OCI-LY7 (cell line): ENCODE measurements at regions of chr22 and their contacts with region 1.

Region 1: DNA sequence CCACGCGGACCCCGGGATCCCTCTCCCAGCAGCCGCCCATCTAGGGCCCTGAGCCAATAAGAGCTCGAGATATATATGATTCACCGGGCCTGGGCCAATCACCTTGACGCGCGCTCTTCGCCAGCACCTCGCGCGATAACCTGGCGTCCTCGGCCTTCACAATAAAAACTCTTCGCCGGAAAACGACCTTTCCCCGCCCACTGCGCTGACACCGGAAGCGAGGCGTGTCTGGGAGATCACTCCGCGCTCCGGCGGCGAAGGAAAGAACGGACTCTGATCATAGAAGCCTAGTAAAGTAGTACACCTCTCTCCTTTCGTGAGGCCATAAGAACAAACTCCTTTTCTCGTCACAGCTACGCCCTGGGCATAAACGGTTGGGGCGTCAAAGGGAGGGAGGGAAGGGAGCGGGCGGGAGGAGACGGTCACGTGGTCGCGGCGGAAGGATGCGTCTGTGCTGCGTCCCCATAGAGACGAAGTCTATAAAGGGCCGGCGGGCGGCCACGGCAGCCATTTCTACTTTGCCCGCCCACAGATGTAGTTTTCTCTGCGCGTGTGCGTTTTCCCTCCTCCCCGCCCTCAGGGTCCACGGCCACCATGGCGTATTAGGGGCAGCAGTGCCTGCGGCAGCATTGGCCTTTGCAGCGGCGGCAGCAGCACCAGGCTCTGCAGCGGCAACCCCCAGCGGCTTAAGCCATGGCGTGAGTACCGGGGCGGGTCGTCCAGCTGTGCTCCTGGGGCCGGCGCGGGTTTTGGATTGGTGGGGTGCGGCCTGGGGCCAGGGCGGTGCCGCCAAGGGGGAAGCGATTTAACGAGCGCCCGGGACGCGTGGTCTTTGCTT is at the start of gene ATF4:
- DNase-seq: peak; percentile 99
- H3K4me3 ChIP-seq: peak within 1 kb of the TSS; percentile 85
- H3K27ac ChIP-seq: peak within 1 kb of the TSS; percentile 89
- H3K4me1 ChIP-seq: peaks cover 56% of the 10 kb centered on the region
- CTCF ChIP-seq: no peak
- total RNA-seq, gene ATF4: 716 and 720 TPM in 2 replicates

Region 2: DNA sequence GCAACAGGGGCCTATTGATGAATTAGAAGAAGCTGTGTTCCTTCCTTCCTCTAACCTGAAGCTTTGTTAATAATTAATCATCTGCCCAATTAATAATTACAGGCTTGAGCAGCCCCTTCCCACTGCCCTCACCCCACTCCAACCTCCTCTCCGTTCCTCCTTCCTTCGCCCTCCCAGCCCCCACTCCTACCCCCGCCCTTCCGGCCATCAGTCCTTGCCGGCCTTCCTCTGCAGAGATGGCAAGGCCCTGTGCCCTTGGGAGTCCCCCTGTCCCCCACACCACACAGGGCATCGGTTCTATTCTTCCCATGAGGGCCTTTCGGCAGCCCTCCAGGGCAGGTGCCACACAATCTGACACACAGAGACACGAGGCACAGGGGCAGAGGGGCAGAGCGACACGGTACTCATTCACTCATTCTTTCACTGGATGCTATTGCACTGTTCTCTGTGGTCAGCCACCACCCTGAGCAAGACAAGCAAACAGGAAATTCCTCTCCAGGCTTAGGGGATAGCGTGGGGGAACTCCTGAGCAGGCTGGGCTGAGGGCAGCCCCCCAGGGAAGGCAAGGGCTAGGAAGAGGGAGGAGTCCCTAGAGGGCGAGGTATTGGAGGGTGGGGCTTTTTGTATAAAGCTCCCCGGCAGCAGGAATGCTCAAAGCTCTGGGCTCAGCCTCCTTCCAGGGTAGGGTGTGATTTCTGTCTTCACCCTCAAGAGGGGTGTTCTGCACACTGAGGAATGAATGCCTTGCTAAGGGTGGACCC is 48.7 kb before region 1 on chr22:
- CTCF ChIA-PET with region 1: interaction called, 35 read pairs
- POLR2A ChIA-PET with region 1: no interaction called
- intact Hi-C with region 1: no loop called
- DNase-seq: no peak
- H3K4me3 ChIP-seq: peak overlapping the region; percentile 25
- H3K27ac ChIP-seq: peak overlapping the region; percentile 66
- H3K4me1 ChIP-seq: peaks cover 82% of the 10 kb centered on the region
- CTCF ChIP-seq: no peak

Region 3: GRCh38 chr22:39502109-39502788 is 18.0 kb before region 1 on chr22 and contains the start of gene MIEF1:
- CTCF ChIA-PET with region 1: no interaction called
- POLR2A ChIA-PET with region 1: interaction called, 5 read pairs
- intact Hi-C with region 1: loop called (anchors 1 kb)
- DNase-seq: peak; percentile 96
- H3K4me3 ChIP-seq: peak within 1 kb of the TSS; percentile 87
- H3K27ac ChIP-seq: peak within 1 kb of the TSS; percentile 45
- H3K4me1 ChIP-seq: peaks cover 20% of the 10 kb centered on the region
- CTCF ChIP-seq: no peak
- total RNA-seq, gene MIEF1: 32.5 and 34.1 TPM in 2 replicates

Region 4: DNA sequence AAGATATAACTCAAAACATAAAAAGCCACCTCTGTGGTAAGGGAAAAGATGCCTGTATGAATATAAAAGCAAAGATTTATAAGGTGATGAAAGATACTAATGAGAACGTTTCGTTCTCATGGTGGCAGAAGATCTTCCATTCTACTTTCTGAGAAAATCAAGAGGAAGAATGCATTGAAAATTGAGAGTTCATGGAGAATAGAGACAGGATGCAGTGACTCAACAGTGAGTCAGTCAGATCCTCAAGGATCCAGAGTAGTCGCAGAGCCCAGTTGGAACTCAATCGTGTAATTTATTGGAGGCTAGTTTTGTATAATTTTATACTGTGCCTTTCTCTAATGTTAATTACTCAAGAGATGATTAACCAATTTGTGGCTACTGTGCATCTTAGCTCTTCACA is 300.0 kb after region 1 on chr22:
- CTCF ChIA-PET with region 1: no interaction called
- POLR2A ChIA-PET with region 1: no interaction called
- intact Hi-C with region 1: no loop called
- DNase-seq: no peak
- H3K4me3 ChIP-seq: no peak overlapping the region
- H3K27ac ChIP-seq: no peak overlapping the region
- H3K4me1 ChIP-seq: no peaks in the 10 kb centered on the region
- CTCF ChIP-seq: no peak